ENCODE measurements at regions of chr15 and their contacts with region 1.

Region 1: GRCh38 chr15:92808978-92809879 is 90.9 kb upstream of the CHD2 start:
- DNase-seq: peak; percentile 99
- H3K4me3 ChIP-seq: peak overlapping the region; percentile 73
- H3K27ac ChIP-seq: peak overlapping the region; percentile 98
- H3K4me1 ChIP-seq: peaks cover 51% of the 10 kb centered on the region
- CTCF ChIP-seq: peak; percentile 91

Region 2: DNA sequence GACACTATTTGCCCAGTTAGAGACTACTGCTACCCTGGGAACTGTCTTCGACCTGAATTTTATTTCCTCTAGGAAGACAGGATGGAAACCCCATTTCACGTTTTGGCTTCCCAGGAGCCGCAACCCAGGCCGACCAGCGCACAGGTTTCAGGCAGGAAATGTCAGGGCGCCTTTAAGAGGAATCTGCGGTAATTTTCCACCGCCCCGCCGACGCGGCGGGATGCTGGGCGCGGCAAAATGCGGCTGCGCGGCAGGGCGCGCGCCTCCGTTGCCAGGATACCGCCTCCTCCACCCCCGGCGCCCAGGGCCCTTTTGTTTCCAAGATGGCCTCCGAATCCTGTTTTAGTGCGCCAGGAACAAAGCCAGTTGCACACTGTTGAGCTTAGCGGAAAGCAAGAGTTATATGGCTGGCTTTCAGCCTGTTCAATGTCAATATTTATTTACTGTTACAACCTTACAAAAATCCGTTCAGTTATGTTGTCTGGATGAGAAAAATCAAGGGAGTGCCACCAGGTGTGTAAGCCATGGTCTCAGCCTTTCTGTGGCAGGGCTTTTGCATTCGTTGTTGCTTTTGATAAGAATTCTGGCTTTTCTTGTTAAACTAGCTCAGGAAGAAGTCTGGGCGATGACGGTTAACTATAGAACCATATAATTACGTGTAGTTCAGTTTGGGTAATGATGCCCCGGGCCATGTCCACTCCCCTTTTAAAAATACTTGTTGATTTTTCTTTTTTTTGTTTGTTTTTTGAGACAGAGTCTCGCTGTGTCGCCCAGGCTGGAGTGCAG is 11.2 kb after region 1 on chr15:
- CTCF ChIA-PET with region 1: interaction called, 3 read pairs
- POLR2A ChIA-PET with region 1: interaction called, 48 read pairs
- intact Hi-C with region 1: no loop called
- DNase-seq: peak; percentile 91
- H3K4me3 ChIP-seq: peak overlapping the region; percentile 58
- H3K27ac ChIP-seq: peak overlapping the region; percentile 71
- H3K4me1 ChIP-seq: peaks cover 74% of the 10 kb centered on the region
- CTCF ChIP-seq: no peak

Region 3: GRCh38 chr15:92831655-92832328 is 22.6 kb after region 1 on chr15:
- CTCF ChIA-PET with region 1: interaction called, 8 read pairs
- POLR2A ChIA-PET with region 1: interaction called, 154 read pairs
- intact Hi-C with region 1: loop called (anchors 1 kb)
- DNase-seq: peak; percentile 100
- H3K4me3 ChIP-seq: peak overlapping the region; percentile 64
- H3K27ac ChIP-seq: peak overlapping the region; percentile 99
- H3K4me1 ChIP-seq: peaks cover 72% of the 10 kb centered on the region
- CTCF ChIP-seq: no peak

Region 4: DNA sequence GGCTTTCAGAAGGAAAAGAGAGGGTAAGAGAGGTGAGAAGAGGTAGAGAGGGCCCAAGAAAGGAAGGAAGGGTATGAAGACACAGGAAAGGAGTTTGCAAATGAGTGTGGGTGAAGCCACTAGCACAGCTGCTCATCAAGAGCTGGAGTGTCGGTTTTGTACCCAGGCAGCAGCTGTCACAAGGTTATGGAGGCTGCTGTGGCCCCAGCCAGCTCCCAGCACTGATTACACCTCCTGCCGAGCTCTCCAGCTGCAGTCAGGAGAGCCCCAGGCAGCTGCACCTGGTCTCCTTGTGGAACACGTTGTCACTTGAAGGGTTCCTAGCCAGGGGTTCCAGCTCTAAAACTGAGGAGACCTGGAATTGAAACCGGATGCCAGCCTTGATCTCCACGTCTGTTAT is 30.5 kb after region 1 on chr15:
- CTCF ChIA-PET with region 1: no interaction called
- POLR2A ChIA-PET with region 1: interaction called, 154 read pairs
- intact Hi-C with region 1: no loop called
- DNase-seq: peak; percentile 87
- H3K4me3 ChIP-seq: peak overlapping the region; percentile 32
- H3K27ac ChIP-seq: peak overlapping the region; percentile 80
- H3K4me1 ChIP-seq: peaks cover 76% of the 10 kb centered on the region
- CTCF ChIP-seq: no peak

Region 5: DNA sequence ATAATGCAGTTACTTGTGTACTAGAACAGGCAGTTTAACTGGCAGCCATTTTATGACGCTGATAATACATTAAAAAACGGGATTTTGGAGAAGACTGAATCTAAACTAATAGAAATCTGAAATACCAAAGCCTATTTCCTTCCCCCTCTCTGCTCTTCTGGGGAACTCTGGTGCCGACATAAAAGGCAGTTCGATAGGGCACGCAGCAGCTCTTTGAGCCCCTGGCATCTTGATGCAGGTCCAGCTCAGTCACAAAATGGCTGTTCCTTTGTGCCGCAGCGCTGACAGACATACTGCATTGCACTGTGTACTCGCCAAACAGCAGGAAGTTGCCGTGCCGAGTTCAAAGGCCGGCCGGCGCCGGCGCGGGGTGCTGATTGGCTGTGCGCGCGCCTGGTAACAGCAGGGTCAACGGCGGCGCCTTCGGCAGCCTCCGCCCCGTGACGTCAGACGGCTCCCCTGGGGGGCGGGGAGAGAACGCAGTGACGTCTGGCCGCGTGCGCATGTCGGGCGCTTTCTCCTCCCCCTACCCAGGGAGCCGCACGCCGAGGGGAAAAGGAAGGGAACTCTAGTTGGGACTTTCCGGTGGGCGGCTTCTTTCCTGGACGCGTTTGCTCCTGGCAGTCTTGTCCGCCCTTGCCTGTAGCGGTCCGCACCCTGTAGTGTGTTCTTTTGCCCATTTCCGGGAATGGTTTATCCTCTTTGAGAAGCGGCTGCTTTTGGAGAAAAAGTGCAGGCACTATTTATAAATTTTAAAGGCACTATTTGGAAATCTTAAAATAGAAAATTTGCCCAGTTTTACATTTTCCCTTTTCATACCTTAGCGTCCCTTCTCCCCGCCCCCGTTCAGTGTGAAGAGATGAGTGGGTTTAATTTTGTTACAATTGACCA is 95.0 kb after region 1 on chr15:
- CTCF ChIA-PET with region 1: interaction called, 3 read pairs
- POLR2A ChIA-PET with region 1: interaction called, 68 read pairs
- intact Hi-C with region 1: loop called (anchors 1 kb)
- DNase-seq: peak; percentile 99
- H3K4me3 ChIP-seq: peak overlapping the region; percentile 92
- H3K27ac ChIP-seq: peak overlapping the region; percentile 94
- H3K4me1 ChIP-seq: peaks cover 47% of the 10 kb centered on the region
- CTCF ChIP-seq: no peak

Region 6: GRCh38 chr15:92917606-92918407 is 108.6 kb after region 1 on chr15:
- CTCF ChIA-PET with region 1: interaction called, 6 read pairs
- POLR2A ChIA-PET with region 1: interaction called, 19 read pairs
- intact Hi-C with region 1: loop called (anchors 1 kb)
- DNase-seq: peak; percentile 95
- H3K4me3 ChIP-seq: peak overlapping the region; percentile 2
- H3K27ac ChIP-seq: peak overlapping the region; percentile 74
- H3K4me1 ChIP-seq: peaks cover 73% of the 10 kb centered on the region
- CTCF ChIP-seq: peak; percentile 99

Measured in OCI-LY7 (cell line).